Heart right ventricle (tissue), 16 donors: ENCODE measurements at regions of chr10 and their contacts with region 1.

Region 1: DNA sequence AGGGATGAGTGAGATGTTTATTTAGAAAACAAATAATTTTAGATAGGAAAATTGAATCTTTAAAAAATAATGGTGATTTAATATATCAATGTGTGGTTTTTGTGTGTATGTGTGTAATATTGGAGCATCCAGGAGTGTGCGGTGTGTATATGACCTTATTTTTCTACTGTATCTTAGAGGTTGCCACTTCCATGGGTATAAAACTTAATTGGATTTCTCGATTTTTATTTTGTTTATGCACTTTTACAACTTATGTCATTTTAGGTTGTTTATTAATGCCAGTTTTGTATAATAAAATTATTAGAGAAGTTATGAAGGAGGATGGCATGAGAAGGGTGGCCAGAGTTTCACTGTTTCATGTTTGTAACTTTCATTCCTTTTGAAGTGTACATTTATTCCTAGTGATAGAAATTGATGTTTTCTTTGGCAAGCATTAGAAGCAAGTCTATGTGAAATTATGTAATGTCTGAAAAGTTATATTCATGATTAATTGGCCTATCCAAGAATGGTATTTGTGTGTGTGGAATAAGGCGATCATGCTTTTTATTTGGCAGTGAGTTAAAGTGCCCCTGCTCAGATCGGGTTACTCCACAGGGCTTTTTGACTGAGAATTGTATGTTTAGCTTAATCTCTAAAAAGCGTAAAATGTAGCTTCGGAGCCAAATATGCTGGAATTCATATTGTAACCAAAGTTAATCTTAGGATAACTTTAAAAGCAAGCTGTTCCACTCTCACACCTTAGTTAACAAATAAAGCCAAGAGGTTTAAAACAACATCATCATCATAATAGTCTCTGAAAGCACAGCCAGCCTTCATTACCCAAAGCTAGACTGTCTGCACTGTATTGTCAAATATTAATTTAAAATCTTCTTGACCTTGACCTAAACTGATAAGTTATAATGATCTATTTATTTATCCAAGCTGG is 110.4 kb downstream of the KAT6B start:
- DNase-seq: no peak
- ATAC-seq: no peak
- H3K4me3 ChIP-seq: no peak overlapping the region
- H3K27ac ChIP-seq: peak overlapping the region in 1 of 10 donors; percentile 3
- H3K4me1 ChIP-seq: peaks cover 4 to 50% (median 30%) of the 10 kb centered on the region in 9 donors
- H3K27me3 ChIP-seq: no peaks in the 10 kb centered on the region
- CTCF ChIP-seq: no peak

Region 2: DNA sequence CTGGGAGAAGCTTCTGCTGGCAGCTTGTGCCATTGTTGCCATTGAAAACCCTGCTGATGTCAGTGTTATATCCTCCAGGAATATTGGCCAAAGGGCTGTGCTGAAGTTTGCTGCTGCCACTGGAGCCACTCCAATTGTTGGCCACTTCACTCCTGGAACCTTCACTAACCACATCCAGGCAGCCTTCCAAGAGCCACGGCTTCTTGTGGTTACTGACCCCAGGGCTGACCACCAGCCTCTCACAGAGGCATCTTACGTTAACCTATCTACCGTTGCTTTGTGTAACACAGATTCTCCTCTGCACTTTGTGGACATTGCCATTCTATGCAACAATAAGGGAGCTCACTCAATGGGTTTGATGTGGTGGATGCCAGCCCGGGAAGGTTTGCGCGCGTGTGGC is 565.1 kb before region 1 on chr10:
- intact Hi-C with region 1: loop called in 1 of 10 experiments (anchors 5 kb)
- DNase-seq: no peak
- ATAC-seq: no peak
- H3K4me3 ChIP-seq: no peak overlapping the region
- H3K27ac ChIP-seq: no peak overlapping the region
- H3K4me1 ChIP-seq: no peaks in the 10 kb centered on the region
- H3K27me3 ChIP-seq: no peaks in the 10 kb centered on the region
- CTCF ChIP-seq: no peak

Region 3: GRCh38 chr10:75029857-75030256 is 93.0 kb after region 1 on chr10:
- intact Hi-C with region 1: no loop called
- DNase-seq: peak in 1 of 2 donors; percentile 33
- ATAC-seq: peak; percentile 27 to 72 (median 38)
- H3K4me3 ChIP-seq: no peak overlapping the region
- H3K27ac ChIP-seq: no peak overlapping the region
- H3K4me1 ChIP-seq: peaks cover 0 to 17% (median 8%) of the 10 kb centered on the region in 9 donors
- H3K27me3 ChIP-seq: no peaks in the 10 kb centered on the region
- CTCF ChIP-seq: no peak

Region 4: GRCh38 chr10:75450644-75451640 is 514.1 kb after region 1 on chr10:
- intact Hi-C with region 1: no loop called
- DNase-seq: no peak
- ATAC-seq: no peak
- H3K4me3 ChIP-seq: no peak overlapping the region
- H3K27ac ChIP-seq: peak overlapping the region in 3 of 10 donors; percentile 29 to 52 (median 47)
- H3K4me1 ChIP-seq: peaks cover 7 to 34% (median 15%) of the 10 kb centered on the region in 9 donors
- H3K27me3 ChIP-seq: peaks cover 0 to 4% (median 0%) of the 10 kb centered on the region in 7 donors
- CTCF ChIP-seq: no peak